ENCODE measurements at regions of chr14 and their contacts with region 1.

Region 1: DNA sequence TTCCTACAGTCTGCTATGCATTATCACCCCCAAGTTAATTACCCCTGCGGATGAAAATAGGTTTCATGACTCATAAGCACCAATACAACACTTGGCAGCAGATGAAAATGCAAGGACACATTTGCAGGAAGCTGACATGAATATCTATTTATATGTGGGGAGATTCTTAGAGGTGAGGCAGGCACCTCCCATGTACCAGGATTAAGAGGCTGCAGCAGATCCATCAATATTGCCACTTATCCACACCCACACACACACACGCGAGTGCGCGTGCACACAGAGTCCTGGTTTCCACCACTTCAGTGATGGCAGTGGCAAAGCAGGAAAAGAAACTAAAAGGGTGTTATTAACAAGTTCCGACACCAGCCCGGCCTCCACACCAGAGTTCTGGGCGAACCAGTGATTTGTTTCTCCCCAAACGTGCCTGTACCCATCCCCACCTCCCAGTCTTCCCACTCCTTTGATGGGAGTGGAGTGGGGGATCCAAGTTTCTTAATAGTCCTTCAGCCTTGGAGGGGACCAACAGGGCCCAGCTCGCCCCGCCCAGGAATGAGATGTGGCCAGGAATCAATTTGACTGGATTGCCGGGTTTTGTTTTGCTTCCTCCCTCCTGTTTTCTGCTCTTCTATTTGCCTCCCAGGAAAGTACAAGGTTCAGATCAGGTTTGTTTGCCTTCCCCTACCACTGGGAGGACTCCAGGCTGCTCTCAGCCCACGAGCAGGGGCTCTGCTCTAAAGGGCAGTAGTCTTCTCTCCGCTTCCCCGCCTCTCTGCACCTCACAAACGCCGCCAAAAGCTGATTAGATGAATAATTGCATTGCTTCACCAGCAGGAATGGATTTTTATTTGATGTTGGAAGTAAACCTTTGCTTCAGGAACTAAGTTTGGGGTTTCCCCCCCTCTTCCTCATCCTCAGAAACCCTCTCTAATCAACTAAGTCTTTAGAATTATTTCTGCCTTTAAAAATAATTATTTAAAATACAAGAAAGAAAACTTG is 5.2 kb downstream of the IRF2BPL start:
- DNase-seq: peak in 1 of 3 donors; percentile 39
- H3K4me3 ChIP-seq: no peak overlapping the region
- H3K27ac ChIP-seq: no peak overlapping the region
- H3K4me1 ChIP-seq: peaks cover 0 to 56% (median 48%) of the 10 kb centered on the region in 4 experiments
- H3K27me3 ChIP-seq: no peaks in the 10 kb centered on the region

Region 2: DNA sequence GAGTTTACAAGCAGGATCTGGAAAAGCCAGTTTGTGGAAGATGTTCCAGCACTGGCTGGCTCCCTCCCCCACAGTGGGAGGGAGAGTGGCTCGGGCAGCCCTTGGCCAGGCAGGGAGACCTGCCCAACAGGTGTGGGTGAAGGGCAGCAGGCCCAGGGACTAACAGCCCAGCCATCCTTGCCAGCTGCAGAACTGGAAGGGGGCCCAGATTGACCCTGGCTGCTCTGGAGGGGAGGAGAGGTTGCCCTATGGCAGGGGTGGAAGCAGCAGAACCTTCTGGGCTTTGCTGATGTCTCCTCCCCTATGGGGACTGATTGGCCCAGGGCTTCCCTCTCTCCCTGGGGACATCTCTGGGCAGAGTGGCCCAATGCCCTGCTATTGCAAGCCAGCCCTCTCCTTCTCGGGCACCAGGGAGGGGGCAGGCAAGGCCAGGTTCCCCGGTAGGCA is 15.3 kb before region 1 on chr14:
- CTCF ChIA-PET with region 1: interaction called, 11 read pairs
- POLR2A ChIA-PET with region 1: interaction called, 4 read pairs
- DNase-seq: no peak
- H3K4me3 ChIP-seq: no peak overlapping the region
- H3K27ac ChIP-seq: no peak overlapping the region
- H3K4me1 ChIP-seq: peaks cover 0 to 24% (median 9%) of the 10 kb centered on the region in 4 experiments
- H3K27me3 ChIP-seq: no peaks in the 10 kb centered on the region

Measured in common myeloid progenitor, CD34-positive (primary cell).